Naive thymus-derived CD4-positive, alpha-beta T cell (primary cell): ENCODE measurements at regions of chr3 and their contacts with region 1.

Region 1: DNA sequence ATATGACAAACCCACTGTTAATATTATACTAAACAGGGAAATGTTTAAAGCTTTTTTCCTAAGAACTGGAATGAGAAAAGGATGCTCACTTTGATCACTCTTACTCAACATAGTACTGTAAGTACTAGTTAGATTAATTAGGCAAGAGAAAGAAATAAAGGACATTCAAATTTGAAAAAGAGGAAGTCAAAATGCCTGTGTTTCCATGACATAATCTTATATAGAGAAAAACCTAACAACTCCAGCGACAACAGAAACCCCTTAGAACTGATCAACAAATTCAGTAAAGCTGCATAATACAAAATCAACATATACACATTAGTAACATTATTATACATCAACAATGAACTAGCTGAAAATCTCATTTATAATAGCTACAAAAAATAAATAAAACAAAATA is 200.6 kb upstream of the ROBO1 start:
- DNase-seq: no peak
- ATAC-seq: no peak
- H3K4me3 ChIP-seq: no peak overlapping the region
- H3K4me3 Mint-ChIP-seq: no peak overlapping the region
- H3K27ac ChIP-seq: no peak overlapping the region
- H3K27ac Mint-ChIP-seq: no peak overlapping the region
- H3K4me1 ChIP-seq: no peaks in the 10 kb centered on the region
- H3K4me1 Mint-ChIP-seq: no peaks in the 10 kb centered on the region
- H3K27me3 ChIP-seq: no peaks in the 10 kb centered on the region
- H3K27me3 Mint-ChIP-seq: no peaks in the 10 kb centered on the region

Region 2: DNA sequence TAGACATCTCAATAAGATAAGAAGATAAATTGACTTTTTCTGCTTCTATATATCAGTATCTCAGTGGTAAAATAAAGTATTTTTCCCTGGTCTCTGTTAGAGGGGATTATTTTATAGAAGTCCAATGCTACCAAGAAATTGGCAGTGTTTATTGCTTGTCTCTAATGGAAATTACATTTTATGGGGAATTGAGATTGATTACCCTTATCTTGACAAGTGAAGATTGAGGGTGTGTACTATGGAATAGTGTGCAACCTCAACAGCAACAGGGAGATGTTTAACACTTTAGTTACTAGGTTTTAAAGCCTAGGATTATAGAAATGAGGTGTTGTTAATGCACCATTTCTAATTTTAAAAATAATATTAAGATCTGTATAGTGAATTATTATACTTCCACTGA is 45.8 kb before region 1 on chr3:
- CTCF ChIA-PET with region 1: no interaction called
- POLR2A ChIA-PET with region 1: interaction called, 10 read pairs
- intact Hi-C with region 1: no loop called
- DNase-seq: no peak
- ATAC-seq: no peak
- H3K4me3 ChIP-seq: no peak overlapping the region
- H3K4me3 Mint-ChIP-seq: no peak overlapping the region
- H3K27ac ChIP-seq: no peak overlapping the region
- H3K27ac Mint-ChIP-seq: no peak overlapping the region
- H3K4me1 ChIP-seq: no peaks in the 10 kb centered on the region
- H3K4me1 Mint-ChIP-seq: peaks cover 0 to 1% (median 0%) of the 10 kb centered on the region in 7 donors
- H3K27me3 ChIP-seq: no peaks in the 10 kb centered on the region
- H3K27me3 Mint-ChIP-seq: no peaks in the 10 kb centered on the region